K562 (cell line): ENCODE measurements at regions of chr12 and their contacts with region 1.

Region 1: DNA sequence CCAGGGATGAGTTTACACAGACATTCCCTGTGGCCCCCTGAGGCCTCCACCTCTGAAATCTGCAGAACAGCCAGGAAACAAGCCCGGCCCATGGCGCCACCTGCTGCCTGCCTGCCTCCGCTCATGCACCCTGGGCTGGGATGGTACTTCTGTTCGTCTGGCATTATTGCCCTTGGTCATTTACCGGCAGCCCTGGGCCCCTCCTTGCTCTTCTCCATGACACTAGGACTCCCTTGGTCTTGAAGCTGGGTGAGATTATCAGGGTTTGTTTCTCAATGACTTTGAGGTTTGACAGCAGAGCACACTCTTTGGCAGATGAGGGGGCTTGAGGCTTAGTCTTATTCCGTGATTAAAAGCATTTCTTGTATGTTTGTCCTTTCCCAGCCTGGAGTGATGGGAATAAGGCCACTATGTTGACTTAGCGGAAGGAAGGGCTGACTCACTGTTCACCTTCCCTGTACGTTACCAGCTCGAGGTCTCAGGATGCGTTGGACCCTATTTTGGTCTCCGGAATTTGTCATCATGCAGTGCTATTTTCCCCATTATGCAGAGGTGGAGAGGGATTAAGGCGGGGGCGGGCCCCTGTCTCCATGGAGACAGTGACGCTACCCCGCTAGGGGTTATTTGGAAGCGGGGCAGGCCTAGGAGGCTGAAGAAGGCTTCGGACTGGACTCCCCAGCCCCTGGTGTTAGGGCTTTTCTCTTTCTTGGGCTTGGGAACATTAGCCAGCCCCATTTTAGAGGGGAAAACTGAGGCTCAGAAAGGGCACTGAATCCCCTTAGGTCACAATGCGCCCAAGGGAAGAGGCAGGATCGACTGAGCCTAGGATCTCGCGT is 706 bp upstream of the PEX5 start:
- DNase-seq: peak; percentile 44 to 71 (median 50)
- ATAC-seq: peak; percentile 78
- H3K4me3 ChIP-seq: peak overlapping the region; percentile 69
- H3K27ac ChIP-seq: peak overlapping the region; percentile 82
- H3K4me1 ChIP-seq: peaks cover 8 to 17% of the 10 kb centered on the region in 2 experiments; a peak in 4 of 5 replicates
- H3K27me3 ChIP-seq: no peaks in the 10 kb centered on the region
- CTCF ChIP-seq: peak; percentile 69 to 80 (median 76)
- EP300 ChIP-seq: no peak
- POLR2A ChIP-seq: no peak
- RAD21 ChIP-seq: peak; percentile 23 to 64; a peak in 3 of 4 replicates

Region 2: DNA sequence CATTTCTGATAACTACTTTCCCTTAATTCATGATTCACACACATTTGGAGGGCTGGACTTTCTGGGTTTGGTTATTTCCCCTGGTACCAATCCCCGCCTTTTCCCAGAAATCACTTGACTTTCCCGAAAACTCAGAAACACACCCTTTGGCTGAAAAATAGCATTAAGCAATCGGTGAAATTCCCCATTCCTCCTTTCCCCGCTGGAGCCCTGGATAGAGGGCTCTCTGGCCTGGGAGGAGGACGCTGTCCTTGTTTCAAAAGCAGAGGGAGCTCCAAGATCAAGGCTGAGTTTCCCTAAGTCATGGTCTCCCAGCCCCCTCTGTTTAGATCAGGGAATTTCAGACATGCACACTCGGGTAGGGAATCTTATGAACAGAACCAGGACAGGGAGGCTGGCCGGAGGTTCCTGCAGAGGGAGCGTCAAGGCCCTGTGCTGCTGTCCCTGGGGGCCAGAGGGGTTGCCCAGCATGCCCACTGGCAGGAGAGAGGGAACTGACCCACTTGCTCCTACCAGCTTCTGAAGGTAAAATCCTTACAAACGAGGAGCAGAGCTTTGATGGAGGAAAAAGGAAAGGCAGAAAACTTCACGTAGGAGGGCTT is 128.3 kb before region 1 on chr12 and contains the start of gene C1S:
- CTCF ChIA-PET with region 1: interaction called, 4 read pairs
- POLR2A ChIA-PET with region 1: no interaction called
- in situ Hi-C with region 1: no loop called
- intact Hi-C with region 1: loop called (anchors 1 kb)
- DNase-seq: peak; percentile 29 to 59 (median 43)
- ATAC-seq: peak; percentile 88
- H3K4me3 ChIP-seq: no peak within 1 kb of the TSS
- H3K27ac ChIP-seq: no peak within 1 kb of the TSS
- H3K4me1 ChIP-seq: peaks cover 11 to 18% of the 10 kb centered on the region in 2 experiments; a peak in 3 of 5 replicates
- H3K27me3 ChIP-seq: no peaks in the 10 kb centered on the region
- CTCF ChIP-seq: peak; percentile 65 to 79 (median 68)
- EP300 ChIP-seq: no peak
- POLR2A ChIP-seq: no peak
- RAD21 ChIP-seq: peak; percentile 73 to 74
- polyA plus RNA-seq, gene C1S: 0.08 to 0.11 TPM

Region 3: DNA sequence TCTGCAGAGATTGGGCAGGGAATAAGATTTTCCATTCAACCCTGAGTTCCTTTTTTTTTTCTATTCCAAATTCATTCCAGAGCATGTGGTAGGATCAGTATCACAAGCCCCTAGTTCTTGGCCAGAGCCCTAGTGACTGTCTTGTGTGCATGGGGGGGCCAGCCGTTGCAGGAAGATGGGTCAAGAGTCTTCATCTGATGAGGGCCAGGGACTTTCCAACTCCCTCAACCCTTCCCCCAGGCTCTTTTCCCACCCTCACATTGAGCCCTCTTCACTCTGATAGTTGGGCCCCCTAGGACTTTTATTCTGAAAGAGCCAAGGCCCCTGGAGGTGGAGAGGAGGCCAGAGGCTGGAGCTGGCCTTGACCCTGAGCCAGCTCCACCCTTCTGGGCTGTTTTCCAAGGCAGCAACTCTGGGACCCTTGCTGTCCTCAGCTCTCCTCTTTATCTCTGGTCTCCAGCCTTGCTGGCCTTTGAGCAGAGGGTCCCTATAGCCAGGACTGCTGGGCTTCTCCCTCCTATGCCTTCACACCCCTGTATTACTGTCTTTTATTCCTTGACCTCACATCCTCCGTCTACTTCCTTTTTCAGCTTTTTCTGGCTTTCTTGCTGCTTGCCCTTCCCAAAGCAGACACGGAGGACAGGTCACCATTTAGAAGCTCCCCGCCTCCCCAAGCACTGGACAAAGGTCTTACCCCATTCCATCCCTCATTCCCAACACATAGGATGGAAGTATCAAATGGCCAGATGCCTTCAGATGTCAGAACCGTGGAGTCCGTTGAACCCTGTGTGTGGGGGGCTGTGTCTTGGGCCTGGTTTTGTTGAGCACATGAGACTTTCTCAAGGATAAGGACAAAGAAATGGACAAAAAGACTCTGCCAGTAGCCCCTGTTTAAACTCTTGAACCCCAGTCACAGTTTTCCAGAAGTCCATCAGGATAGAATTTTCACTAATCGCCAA is 65.7 kb before region 1 on chr12:
- CTCF ChIA-PET with region 1: no interaction called
- POLR2A ChIA-PET with region 1: no interaction called
- in situ Hi-C with region 1: no loop called
- intact Hi-C with region 1: loop called (anchors 5 kb)
- DNase-seq: peak; percentile 76 to 94 (median 83)
- ATAC-seq: peak; percentile 86
- H3K4me3 ChIP-seq: no peak overlapping the region
- H3K27ac ChIP-seq: peak overlapping the region; percentile 88
- H3K4me1 ChIP-seq: peaks cover 51 to 64% of the 10 kb centered on the region in 2 experiments
- H3K27me3 ChIP-seq: no peaks in the 10 kb centered on the region
- CTCF ChIP-seq: no peak
- EP300 ChIP-seq: peak; percentile 80
- POLR2A ChIP-seq: no peak
- RAD21 ChIP-seq: no peak

Region 4: GRCh38 chr12:7142056-7142644 is 46.6 kb before region 1 on chr12:
- CTCF ChIA-PET with region 1: interaction called, 6 read pairs
- POLR2A ChIA-PET with region 1: no interaction called
- in situ Hi-C with region 1: no loop called
- intact Hi-C with region 1: loop called (anchors 1 kb)
- DNase-seq: peak; percentile 53 to 61 (median 60)
- ATAC-seq: peak; percentile 93
- H3K4me3 ChIP-seq: no peak overlapping the region
- H3K27ac ChIP-seq: no peak overlapping the region
- H3K4me1 ChIP-seq: peaks cover 7 to 10% of the 10 kb centered on the region in 2 experiments; a peak in 3 of 5 replicates
- H3K27me3 ChIP-seq: no peaks in the 10 kb centered on the region
- CTCF ChIP-seq: peak; percentile 74 to 81 (median 76)
- EP300 ChIP-seq: no peak
- POLR2A ChIP-seq: no peak
- RAD21 ChIP-seq: peak; percentile 31 to 55